ENCODE measurements at regions of chr9 and their contacts with region 1.

Region 1: DNA sequence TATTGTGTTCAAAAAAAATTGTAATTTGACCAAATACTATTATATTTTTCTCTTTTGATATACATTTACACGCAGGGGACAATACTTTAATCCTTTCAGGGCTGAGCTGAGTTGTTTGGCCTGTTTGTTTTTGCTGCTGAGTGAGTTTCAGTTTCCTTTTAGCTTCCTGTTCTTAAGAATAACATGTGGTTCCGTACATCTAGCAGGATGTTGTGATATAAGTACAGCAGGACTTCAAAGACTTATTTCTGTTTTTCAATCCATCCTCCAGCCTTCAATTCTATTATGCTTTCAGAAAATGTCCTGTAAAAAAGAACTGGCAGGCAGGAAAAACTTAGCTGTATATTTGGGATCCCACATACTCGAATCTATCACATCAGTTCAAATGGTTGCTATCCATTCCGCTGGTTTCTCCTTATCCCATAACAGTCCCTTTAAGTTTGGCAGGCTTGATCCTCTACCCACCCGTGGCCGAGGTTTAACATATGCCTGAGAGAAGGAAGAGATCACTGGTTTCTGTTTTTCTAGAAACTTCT is 1037.3 kb upstream of the ACO1 start:
- DNase-seq: peak in 6 of 10 donors; percentile 21 to 78 (median 54)
- ATAC-seq: peak; percentile 97 to 99
- H3K4me3 Mint-ChIP-seq: peak overlapping the region; percentile 54 to 74 (median 64)
- H3K27ac Mint-ChIP-seq: peak overlapping the region; percentile 87 to 100 (median 96)
- H3K4me1 Mint-ChIP-seq: peaks cover 14 to 50% (median 40%) of the 10 kb centered on the region in 4 donors
- H3K27me3 Mint-ChIP-seq: no peaks in the 10 kb centered on the region

Region 2: DNA sequence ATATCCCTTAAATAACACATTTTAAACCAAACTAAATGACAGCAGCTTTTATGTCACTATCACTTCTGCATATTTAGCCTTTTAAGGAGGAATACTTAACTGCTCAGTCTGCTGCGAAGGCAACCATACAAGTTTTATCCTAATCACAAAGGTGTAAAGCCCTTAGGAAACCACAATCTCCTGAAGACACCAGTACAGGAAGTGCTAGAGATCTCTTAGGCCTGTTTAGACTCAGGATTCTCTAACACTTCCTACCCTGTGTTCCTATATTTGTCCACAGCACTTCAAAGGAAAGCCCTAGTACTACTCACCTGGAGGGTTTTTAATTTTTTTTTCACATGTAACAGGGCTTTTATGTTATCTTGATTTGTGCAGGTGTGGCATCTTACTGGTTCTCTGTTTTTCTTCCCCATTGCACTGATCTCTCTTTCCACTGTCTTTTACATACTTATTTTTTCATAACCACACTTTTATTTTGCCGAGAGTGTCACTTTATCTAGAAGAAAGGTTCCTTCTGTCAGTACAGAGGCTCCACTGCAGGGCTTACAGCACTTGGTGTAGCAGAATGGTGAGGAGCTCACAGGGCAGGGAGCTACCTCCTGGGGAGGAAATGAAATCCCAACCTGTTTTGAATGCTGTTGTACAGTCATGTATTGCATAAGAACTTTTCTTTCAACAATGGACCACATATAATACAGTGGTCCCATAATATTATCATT is 23.3 kb before region 1 on chr9:
- POLR2A ChIA-PET with region 1: interaction called, 11 read pairs
- DNase-seq: peak in 3 of 10 donors; percentile 37 to 62 (median 48)
- ATAC-seq: peak; percentile 79 to 84
- H3K4me3 Mint-ChIP-seq: peak overlapping the region; percentile 4 to 72 (median 58)
- H3K27ac Mint-ChIP-seq: peak overlapping the region; percentile 72 to 95 (median 86)
- H3K4me1 Mint-ChIP-seq: peaks cover 25 to 46% (median 39%) of the 10 kb centered on the region in 4 donors
- H3K27me3 Mint-ChIP-seq: no peaks in the 10 kb centered on the region

Region 3: GRCh38 chr9:31335529-31336234 is 11.5 kb before region 1 on chr9:
- POLR2A ChIA-PET with region 1: interaction called, 18 read pairs
- DNase-seq: peak in 3 of 10 donors; percentile 6 to 44 (median 34)
- ATAC-seq: peak; percentile 33 to 61
- H3K4me3 Mint-ChIP-seq: peak overlapping the region in 9 of 10 donors; percentile 12 to 72 (median 48)
- H3K27ac Mint-ChIP-seq: peak overlapping the region in 7 of 10 donors; percentile 69 to 93 (median 85)
- H3K4me1 Mint-ChIP-seq: peaks cover 10 to 29% (median 21%) of the 10 kb centered on the region in 4 donors
- H3K27me3 Mint-ChIP-seq: no peaks in the 10 kb centered on the region

Measured in naive thymus-derived CD8-positive, alpha-beta T cell (primary cell).